Panc1 (cell line): ENCODE measurements at regions of chr7 and their contacts with region 1.

Region 1: DNA sequence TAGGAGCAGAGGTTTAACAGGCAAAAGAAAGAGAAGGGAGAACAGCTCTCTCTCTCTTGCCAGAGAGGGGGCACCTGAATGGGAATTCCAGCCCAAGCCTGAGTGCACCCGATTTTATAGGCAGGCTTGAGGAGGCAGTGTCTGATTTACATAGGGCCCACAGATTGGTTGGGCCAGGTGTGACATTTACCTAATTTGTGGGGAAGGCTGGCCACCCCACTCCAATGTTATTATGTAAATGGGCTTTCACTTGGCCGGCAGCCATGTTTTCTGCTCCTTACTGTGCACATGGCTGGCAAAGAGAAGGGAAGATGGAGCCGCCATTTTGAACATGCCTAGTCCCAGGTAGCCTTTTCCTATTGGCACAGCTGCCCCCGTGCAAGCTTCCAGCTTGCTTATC is 735.5 kb upstream of the AUTS2 start:
- DNase-seq: no peak
- ATAC-seq: no peak
- H3K4me3 ChIP-seq: no peak overlapping the region
- H3K27ac ChIP-seq: no peak overlapping the region
- H3K4me1 ChIP-seq: no peaks in the 10 kb centered on the region
- H3K27me3 ChIP-seq: no peaks in the 10 kb centered on the region
- CTCF ChIP-seq: no peak

Region 2: DNA sequence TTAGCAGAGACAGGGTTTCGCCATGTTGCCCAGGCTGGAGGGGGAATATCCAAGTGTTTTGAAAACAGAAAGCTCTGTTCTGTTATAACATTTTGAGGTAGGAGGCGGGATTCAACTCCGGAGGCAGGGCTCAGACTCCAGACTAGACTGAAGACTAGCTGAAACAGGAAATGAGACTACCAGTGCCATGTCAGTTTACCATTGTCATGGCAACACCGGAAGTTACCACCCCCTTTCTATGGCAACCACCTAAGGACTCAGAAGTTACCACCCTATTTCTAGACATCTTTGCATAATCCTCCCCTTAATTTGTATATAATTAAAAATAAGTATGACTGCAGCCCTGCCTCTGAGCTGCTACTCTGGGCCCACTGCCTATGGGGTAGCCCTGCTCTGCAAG is 333.5 kb before region 1 on chr7:
- CTCF ChIA-PET with region 1: no interaction called
- POLR2A ChIA-PET with region 1: interaction called, 16 read pairs
- in situ Hi-C with region 1: no loop called
- intact Hi-C with region 1: no loop called
- DNase-seq: no peak
- ATAC-seq: no peak
- H3K4me3 ChIP-seq: no peak overlapping the region
- H3K27ac ChIP-seq: no peak overlapping the region
- H3K4me1 ChIP-seq: no peaks in the 10 kb centered on the region
- H3K27me3 ChIP-seq: no peaks in the 10 kb centered on the region
- CTCF ChIP-seq: no peak